Activated naive CD4-positive, alpha-beta T cell treated with anti-CD3 and anti-CD28 coated beads for 36 hours (primary cell): ENCODE measurements at regions of chr1 and their contacts with region 1.

Region 1: DNA sequence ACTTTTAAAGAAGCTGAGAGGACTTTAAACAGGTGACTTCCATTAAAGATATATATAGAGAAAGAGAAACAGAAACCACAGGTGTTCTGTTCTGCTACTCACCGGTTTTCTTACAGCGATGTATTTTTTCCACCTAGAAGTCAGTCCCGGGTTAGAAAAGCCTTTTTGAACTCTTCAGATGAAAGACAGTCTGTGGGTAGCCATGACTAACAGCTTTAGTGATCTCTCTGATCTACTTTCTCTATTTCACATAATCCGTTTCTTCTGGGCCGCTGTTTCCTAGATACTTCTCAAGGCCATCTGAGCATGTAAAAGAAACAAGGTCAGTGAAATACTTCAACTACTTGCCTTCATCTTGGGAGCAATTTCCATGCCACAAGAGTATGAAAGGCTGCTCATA is 25.1 kb downstream of the WDR64 start:
- DNase-seq: peak; percentile 36
- H3K4me3 Mint-ChIP-seq: peak overlapping the region; percentile 4
- H3K27ac Mint-ChIP-seq: peak overlapping the region; percentile 37
- H3K4me1 Mint-ChIP-seq: peaks cover 46% of the 10 kb centered on the region
- H3K27me3 Mint-ChIP-seq: no peaks in the 10 kb centered on the region

Region 2: GRCh38 chr1:239719642-239720258 is 1957.5 kb before region 1 on chr1:
- CTCF ChIA-PET with region 1: no interaction called
- intact Hi-C with region 1: loop called (anchors 10 kb)
- DNase-seq: peak; percentile 74
- H3K4me3 Mint-ChIP-seq: peak overlapping the region; percentile 91
- H3K27ac Mint-ChIP-seq: peak overlapping the region; percentile 97
- H3K4me1 Mint-ChIP-seq: peaks cover 41% of the 10 kb centered on the region
- H3K27me3 Mint-ChIP-seq: no peaks in the 10 kb centered on the region

Region 3: DNA sequence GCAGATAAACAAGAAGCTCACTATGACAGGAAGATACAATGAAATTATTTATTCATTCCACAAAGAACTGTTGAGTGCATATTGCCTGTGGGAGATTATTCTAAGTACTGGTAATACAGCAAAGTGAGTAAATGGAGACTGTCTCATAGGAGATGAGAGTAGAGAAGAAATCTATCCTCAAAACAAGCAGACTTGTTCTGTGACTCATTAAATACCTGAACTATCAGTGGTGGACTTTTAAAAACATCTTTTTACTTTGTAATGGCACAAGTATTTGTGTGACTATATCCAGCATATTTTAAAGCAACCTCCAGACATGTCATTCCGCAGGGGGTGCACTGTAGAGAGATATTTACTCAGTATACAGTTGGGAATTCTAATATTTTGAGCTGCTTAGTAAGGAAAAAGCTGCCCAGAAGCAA is 1326.3 kb before region 1 on chr1:
- CTCF ChIA-PET with region 1: no interaction called
- intact Hi-C with region 1: no loop called
- DNase-seq: no peak
- H3K4me3 Mint-ChIP-seq: no peak overlapping the region
- H3K27ac Mint-ChIP-seq: no peak overlapping the region
- H3K4me1 Mint-ChIP-seq: no peaks in the 10 kb centered on the region
- H3K27me3 Mint-ChIP-seq: peaks cover 3% of the 10 kb centered on the region

Region 4: GRCh38 chr1:241447031-241447644 is 230.1 kb before region 1 on chr1:
- CTCF ChIA-PET with region 1: no interaction called
- intact Hi-C with region 1: no loop called
- DNase-seq: no peak
- H3K4me3 Mint-ChIP-seq: no peak overlapping the region
- H3K27ac Mint-ChIP-seq: no peak overlapping the region
- H3K4me1 Mint-ChIP-seq: no peaks in the 10 kb centered on the region
- H3K27me3 Mint-ChIP-seq: peaks cover 5% of the 10 kb centered on the region

Region 5: DNA sequence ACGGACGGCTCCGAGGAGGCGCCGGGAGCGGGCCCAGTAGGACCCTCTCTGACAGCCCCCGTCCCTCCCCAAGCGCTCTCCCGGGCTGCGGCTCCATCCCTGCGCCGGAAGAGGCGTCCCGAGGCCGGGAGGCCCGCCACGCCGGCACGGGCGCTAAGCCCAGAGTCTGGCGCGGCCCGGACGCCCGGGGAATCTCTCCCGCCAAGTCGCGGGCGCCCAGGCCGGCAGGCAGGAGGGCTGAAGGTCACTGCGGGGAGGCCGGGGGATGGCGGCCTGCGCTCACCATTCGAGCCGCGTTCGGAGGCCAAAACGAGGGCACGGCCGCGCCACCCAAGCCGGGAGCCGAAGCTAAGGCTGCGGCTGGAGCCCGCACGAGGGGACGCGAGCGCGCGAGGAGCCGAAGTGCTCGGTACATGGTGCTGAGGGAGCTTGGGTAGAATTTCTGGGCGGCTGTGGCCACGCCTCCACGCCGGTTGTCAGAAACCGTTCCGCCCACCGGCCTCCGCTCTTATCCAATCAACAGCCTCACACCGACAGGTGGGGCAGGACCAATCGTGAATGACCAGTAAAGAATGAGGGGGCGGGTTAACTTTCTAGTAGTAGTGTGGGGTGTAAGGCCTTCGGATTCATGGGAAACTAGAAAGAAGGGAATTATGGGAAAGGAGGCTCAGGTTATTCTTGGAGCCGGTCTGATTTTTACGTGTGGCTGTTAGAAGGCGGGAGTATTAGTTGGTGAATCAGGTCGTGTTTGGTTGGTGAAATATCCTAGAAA is 157.7 kb before region 1 on chr1 and contains the start of gene FH:
- CTCF ChIA-PET with region 1: no interaction called
- intact Hi-C with region 1: loop called (anchors 1 kb)
- DNase-seq: peak; percentile 97
- H3K4me3 Mint-ChIP-seq: peak within 1 kb of the TSS; percentile 89
- H3K27ac Mint-ChIP-seq: peak within 1 kb of the TSS; percentile 77
- H3K4me1 Mint-ChIP-seq: peaks cover 11% of the 10 kb centered on the region
- H3K27me3 Mint-ChIP-seq: peaks cover 11% of the 10 kb centered on the region
- total RNA-seq, gene FH: 91.6 to 95.4 TPM

Region 6: GRCh38 chr1:241627453-241628259 is 49.5 kb before region 1 on chr1:
- CTCF ChIA-PET with region 1: no interaction called
- intact Hi-C with region 1: loop called (anchors 1 kb)
- DNase-seq: peak; percentile 69
- H3K4me3 Mint-ChIP-seq: peak overlapping the region; percentile 49
- H3K27ac Mint-ChIP-seq: peak overlapping the region; percentile 79
- H3K4me1 Mint-ChIP-seq: peaks cover 31% of the 10 kb centered on the region
- H3K27me3 Mint-ChIP-seq: no peaks in the 10 kb centered on the region

Region 7: GRCh38 chr1:241706954-241707365 is 29.8 kb after region 1 on chr1:
- CTCF ChIA-PET with region 1: no interaction called
- intact Hi-C with region 1: loop called (anchors 1 kb)
- DNase-seq: peak; percentile 9
- H3K4me3 Mint-ChIP-seq: no peak overlapping the region
- H3K27ac Mint-ChIP-seq: no peak overlapping the region
- H3K4me1 Mint-ChIP-seq: peaks cover 16% of the 10 kb centered on the region
- H3K27me3 Mint-ChIP-seq: no peaks in the 10 kb centered on the region

Region 8: DNA sequence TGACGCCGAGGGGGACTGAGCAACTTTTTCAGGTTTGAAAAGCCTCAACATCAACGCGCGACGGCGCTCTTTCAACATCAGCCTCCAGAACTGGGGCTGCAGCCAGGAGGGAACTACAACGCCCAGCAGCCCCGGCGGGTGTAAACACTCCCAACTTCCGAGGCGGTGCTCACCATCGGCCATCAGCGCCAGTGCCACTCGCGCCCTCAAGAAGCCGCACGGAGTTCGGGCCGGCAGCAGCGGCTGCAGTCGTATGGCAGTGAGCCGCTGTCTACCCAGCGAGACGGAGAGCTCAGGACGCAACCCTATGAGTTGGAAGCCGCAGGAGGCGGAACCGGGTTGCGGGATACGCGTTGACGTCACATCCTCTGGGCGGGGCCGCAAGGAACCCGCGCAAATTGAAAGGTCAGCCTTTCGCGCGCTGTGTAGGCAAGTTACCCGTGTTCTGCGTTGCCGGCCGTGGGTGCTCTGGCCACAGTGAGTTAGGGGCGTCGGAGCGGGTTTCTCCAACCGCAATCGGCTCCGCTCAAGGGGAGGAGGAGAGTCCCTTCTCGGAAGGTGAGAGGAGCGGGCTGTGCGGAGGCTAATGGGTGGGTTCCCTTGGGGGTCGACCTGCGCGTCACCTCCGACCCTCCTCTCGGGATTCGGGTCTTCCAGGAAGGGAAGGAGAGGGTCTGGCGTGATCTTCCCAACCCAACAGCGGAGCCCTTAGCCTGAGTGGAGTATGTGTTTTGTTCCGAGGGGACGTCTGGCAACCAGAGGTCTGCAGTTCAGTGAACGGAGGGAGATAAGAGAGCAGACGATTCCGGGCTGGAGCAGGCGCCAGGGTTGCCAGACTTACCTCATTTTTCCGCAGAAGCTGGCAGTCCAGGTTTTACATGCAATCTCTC is 170.8 kb after region 1 on chr1 and contains the start of gene EXO1:
- CTCF ChIA-PET with region 1: no interaction called
- intact Hi-C with region 1: loop called (anchors 1 kb)
- DNase-seq: peak; percentile 93
- H3K4me3 Mint-ChIP-seq: peak within 1 kb of the TSS; percentile 98
- H3K27ac Mint-ChIP-seq: peak within 1 kb of the TSS; percentile 99
- H3K4me1 Mint-ChIP-seq: peaks cover 22% of the 10 kb centered on the region
- H3K27me3 Mint-ChIP-seq: peaks cover 1% of the 10 kb centered on the region
- total RNA-seq, gene EXO1: 55.3 to 59.6 TPM

Region 9: GRCh38 chr1:241918879-241919278 is 241.7 kb after region 1 on chr1:
- CTCF ChIA-PET with region 1: no interaction called
- intact Hi-C with region 1: no loop called
- DNase-seq: no peak
- H3K4me3 Mint-ChIP-seq: no peak overlapping the region
- H3K27ac Mint-ChIP-seq: no peak overlapping the region
- H3K4me1 Mint-ChIP-seq: no peaks in the 10 kb centered on the region
- H3K27me3 Mint-ChIP-seq: no peaks in the 10 kb centered on the region